AG04450 (cell line): ENCODE measurements at regions of chr1 and their contacts with region 1.

Region 1: GRCh38 chr1:16260814-16261213 is 23.8 kb upstream of the CPLANE2 start:
- DNase-seq: peak; percentile 55
- H3K4me3 ChIP-seq: no peak overlapping the region
- H3K27ac ChIP-seq: peak overlapping the region; percentile 88
- H3K27me3 ChIP-seq: no peaks in the 10 kb centered on the region
- CTCF ChIP-seq: no peak

Region 2: DNA sequence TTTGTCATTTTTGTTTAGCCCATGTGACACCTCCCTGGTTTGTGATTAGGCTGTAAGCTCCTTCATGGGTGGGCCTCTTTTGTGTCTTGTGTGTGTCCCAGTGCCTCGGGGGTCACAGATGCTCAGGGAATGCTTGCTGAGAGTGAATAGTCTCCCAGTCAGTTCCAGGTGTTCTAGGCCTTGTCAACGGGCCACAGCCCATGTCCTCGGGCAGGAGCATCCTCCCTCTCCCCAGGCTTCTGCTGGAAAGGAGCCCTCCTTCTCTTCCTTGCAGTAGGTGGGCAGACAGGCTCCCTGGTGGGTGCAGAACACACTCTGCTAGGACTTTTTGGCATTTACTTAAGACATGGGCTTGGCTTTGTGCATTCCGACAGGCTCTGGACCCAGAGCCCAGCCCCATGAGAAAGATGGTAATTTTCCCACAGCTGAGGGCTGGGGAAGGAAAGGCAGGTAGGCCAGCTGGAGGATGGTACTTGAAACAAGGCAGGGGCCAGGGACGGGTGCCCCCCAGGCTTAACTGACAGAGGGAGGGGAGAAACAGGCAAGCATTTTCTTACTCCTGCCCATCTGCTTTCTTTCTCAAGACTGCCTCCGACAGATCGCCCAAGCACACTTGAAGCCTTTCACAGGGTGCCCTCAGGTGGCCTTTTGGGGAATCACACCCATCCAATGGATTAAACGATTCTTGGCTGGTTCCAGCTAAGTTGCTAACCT is 16.7 kb before region 1 on chr1:
- CTCF ChIA-PET with region 1: interaction called, 12 read pairs
- POLR2A ChIA-PET with region 1: interaction called, 3 read pairs
- DNase-seq: peak; percentile 58
- H3K4me3 ChIP-seq: no peak overlapping the region
- H3K27ac ChIP-seq: no peak overlapping the region
- H3K27me3 ChIP-seq: no peaks in the 10 kb centered on the region
- CTCF ChIP-seq: peak; percentile 90

Region 3: GRCh38 chr1:16276302-16277030 is 15.7 kb after region 1 on chr1:
- CTCF ChIA-PET with region 1: no interaction called
- POLR2A ChIA-PET with region 1: no interaction called
- DNase-seq: no peak
- H3K4me3 ChIP-seq: no peak overlapping the region
- H3K27ac ChIP-seq: no peak overlapping the region
- H3K27me3 ChIP-seq: no peaks in the 10 kb centered on the region
- CTCF ChIP-seq: no peak